ENCODE measurements at regions of chr19 and their contacts with region 1.

Region 1: GRCh38 chr19:32976208-32976805 is 4.3 kb downstream of the FAAP24 start:
- DNase-seq: peak; percentile 64 to 81 (median 68)
- H3K4me3 ChIP-seq: no peak overlapping the region
- H3K27ac ChIP-seq: no peak overlapping the region
- H3K4me1 ChIP-seq: peaks cover 0 to 6% (median 4%) of the 10 kb centered on the region in 4 experiments
- H3K27me3 ChIP-seq: no peaks in the 10 kb centered on the region

Region 2: DNA sequence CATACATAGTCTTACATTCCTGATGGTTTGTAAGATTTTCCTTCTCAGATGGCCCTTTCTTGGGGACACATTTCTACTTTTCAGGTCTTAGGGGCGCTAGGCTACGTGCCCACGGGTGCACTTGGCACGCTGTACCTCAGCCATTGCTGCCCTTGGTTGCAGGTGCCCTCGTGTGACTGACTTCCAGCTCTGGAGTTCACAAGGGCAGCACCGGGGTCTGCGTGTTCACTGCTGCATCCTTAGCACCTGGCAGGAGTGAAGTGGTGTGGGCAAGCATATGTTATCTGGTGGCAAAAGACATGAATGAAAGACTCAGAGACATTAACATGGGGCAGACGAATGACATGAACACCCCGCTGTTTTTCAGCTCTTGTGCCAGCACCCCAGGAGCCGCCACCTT is 142.3 kb after region 1 on chr19:
- CTCF ChIA-PET with region 1: interaction called, 38 read pairs
- POLR2A ChIA-PET with region 1: no interaction called
- DNase-seq: no peak
- H3K4me3 ChIP-seq: no peak overlapping the region
- H3K27ac ChIP-seq: no peak overlapping the region
- H3K4me1 ChIP-seq: no peaks in the 10 kb centered on the region
- H3K27me3 ChIP-seq: no peaks in the 10 kb centered on the region

Region 3: GRCh38 chr19:33125929-33126388 is 149.7 kb after region 1 on chr19:
- CTCF ChIA-PET with region 1: interaction called, 11 read pairs
- POLR2A ChIA-PET with region 1: no interaction called
- DNase-seq: peak; percentile 60 to 81 (median 78)
- H3K4me3 ChIP-seq: no peak overlapping the region
- H3K27ac ChIP-seq: no peak overlapping the region
- H3K4me1 ChIP-seq: peaks cover 0 to 3% (median 0%) of the 10 kb centered on the region in 4 experiments
- H3K27me3 ChIP-seq: no peaks in the 10 kb centered on the region

Region 4: GRCh38 chr19:33193865-33194362 is 217.6 kb after region 1 on chr19 and contains the start of gene LRP3:
- CTCF ChIA-PET with region 1: no interaction called
- POLR2A ChIA-PET with region 1: no interaction called
- DNase-seq: peak in 2 of 3 donors; percentile 33 to 40
- H3K4me3 ChIP-seq: peak within 1 kb of the TSS; percentile 21 to 66 (median 49)
- H3K27ac ChIP-seq: no peak within 1 kb of the TSS
- H3K4me1 ChIP-seq: peaks cover 0 to 16% (median 9%) of the 10 kb centered on the region in 4 experiments
- H3K27me3 ChIP-seq: peaks cover 0 to 37% (median 8%) of the 10 kb centered on the region in 5 experiments